ENCODE measurements at regions of chr7 and their contacts with region 1.

Region 1: DNA sequence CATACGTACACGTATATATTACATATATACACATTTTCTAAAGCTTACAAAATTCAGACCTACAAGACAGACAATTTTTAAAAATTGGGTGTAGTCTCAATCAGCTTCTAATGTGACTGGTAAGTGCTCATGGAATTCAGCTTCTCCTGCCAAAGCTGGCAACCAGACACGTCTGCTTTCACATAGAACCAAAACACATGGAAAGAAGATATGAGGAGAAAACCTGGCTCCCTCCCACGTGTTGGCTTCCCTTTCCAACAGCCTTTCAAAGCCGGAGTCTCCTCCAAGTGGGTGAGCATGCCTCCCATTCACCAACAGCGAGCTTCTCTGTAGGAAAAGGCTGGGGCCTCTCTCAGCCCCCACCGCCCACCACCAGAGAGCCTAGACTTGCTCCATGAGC is 33.4 kb downstream of the CDCA7L start:
- DNase-seq: no peak
- H3K4me3 ChIP-seq: no peak overlapping the region
- H3K27ac ChIP-seq: no peak overlapping the region
- H3K4me1 ChIP-seq: peaks cover 40% of the 10 kb centered on the region
- CTCF ChIP-seq: no peak

Region 2: DNA sequence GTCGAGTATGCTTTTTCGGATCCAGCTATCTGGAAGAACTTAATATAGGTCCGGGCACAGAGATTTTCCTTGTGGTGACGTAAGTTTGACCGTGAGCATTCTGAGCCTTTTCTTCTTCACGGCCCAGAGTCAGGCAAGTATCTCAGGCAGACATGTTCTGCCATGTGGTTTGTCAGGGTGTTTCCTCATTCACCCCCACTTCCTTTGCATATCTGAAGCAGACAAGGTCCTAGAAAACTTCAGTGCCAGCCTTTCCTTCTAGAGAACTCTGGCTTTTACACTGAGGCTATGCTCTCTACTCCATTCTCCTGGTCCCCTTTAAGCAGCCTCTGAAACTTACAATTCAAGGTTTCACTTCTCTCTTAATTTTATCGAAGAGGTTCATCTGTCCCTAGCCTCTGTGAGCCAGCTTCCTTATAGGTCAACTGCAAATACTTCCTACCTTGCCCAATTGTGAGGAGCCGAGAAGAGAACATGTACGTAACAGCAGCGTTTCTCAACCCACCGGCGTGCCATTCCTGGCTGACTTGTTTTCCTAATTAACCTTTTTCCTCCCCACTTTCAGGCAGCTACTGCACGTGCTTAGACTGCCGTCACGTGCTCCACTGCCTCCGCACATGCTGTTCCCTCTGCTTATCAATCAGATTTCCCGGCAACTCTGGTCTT is 13.9 kb before region 1 on chr7:
- CTCF ChIA-PET with region 1: no interaction called
- POLR2A ChIA-PET with region 1: interaction called, 5 read pairs
- intact Hi-C with region 1: loop called (anchors 1 kb)
- DNase-seq: peak; percentile 66
- H3K4me3 ChIP-seq: no peak overlapping the region
- H3K27ac ChIP-seq: peak overlapping the region; percentile 39
- H3K4me1 ChIP-seq: peaks cover 20% of the 10 kb centered on the region
- CTCF ChIP-seq: no peak

Region 3: DNA sequence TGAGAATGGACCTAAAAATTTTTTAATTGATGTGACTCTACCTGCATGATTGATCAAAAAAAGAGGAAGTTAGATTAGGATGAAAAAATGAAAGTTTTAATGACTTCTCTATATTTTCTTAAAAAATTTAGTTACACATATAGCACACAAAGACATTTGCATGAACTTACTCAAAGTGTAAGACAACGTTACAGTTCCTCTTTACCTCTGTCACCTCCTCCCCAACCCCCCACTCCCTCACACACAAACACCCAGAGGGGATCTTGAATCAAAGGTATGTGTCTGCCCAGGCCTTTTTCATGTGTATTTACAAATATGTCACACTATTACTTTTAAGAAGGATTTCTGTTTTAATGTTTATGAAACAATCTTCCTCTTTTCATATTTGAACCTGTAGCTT is 54.0 kb after region 1 on chr7:
- CTCF ChIA-PET with region 1: interaction called, 3 read pairs
- POLR2A ChIA-PET with region 1: interaction called, 12 read pairs
- intact Hi-C with region 1: no loop called
- DNase-seq: peak; percentile 88
- H3K4me3 ChIP-seq: peak overlapping the region; percentile 59
- H3K27ac ChIP-seq: peak overlapping the region; percentile 91
- H3K4me1 ChIP-seq: peaks cover 66% of the 10 kb centered on the region
- CTCF ChIP-seq: no peak

Region 4: DNA sequence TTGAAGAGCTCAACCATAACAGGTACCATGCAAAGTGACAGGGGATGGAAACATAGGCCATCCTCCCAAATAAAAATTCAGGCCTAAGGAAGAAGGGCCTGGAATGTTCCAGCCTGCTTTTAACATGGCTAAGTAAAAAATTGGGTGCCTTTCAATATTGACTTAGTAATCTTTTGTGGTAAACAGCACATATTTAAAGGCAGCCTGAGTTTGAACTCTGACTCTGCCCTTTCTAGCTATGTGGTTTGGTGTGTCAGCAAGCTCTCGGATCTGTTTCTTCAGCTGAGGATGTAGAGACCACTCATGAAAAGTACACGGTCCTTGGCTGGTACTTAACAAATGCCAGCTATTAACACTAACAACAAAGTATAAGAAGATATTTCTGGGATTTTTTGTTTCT is 225.2 kb after region 1 on chr7:
- CTCF ChIA-PET with region 1: no interaction called
- POLR2A ChIA-PET with region 1: no interaction called
- intact Hi-C with region 1: no loop called
- DNase-seq: no peak
- H3K4me3 ChIP-seq: no peak overlapping the region
- H3K27ac ChIP-seq: no peak overlapping the region
- H3K4me1 ChIP-seq: no peaks in the 10 kb centered on the region
- CTCF ChIP-seq: no peak

Measured in OCI-LY7 (cell line).